Panc1 (cell line): ENCODE measurements at regions of chr17 and their contacts with region 1.

Region 1: GRCh38 chr17:67335329-67335835 is 31.0 kb downstream of the PSMD12 start:
- DNase-seq: no peak
- ATAC-seq: no peak
- H3K4me3 ChIP-seq: no peak overlapping the region
- H3K27ac ChIP-seq: no peak overlapping the region
- H3K4me1 ChIP-seq: no peaks in the 10 kb centered on the region
- H3K27me3 ChIP-seq: no peaks in the 10 kb centered on the region
- CTCF ChIP-seq: no peak

Region 2: DNA sequence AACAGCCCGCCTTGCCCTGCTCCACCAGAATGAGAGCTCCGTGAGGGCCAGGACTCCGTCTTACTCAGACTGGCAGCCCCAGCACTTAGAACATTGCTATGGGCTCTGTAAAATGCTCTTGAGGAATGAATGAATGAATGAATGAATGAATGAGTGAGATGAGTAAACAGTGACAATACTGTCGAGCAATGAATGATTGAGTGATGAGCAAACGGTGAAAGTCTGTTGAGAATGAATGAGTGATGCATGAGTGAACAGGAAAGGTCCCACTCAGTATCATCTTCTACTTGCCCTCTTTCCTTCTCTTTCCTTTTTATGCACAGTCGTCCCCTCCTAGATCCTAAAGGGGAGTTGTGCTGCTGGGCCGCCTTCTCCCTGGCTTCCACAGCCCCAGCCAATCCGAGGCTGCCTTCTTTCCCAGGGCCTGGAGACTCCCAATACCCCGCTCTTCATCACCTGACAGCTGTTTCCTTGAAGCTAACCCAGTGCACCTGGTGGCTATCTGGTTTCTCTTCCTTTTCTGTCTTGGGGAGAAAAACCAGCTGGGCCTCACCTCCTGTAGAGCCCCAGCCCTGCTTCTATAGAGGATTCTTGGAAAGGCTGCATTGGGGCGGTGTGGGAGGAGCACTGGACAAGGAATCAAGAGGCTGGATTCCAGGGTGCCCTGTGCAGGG is 323.7 kb before region 1 on chr17:
- CTCF ChIA-PET with region 1: interaction called, 15 read pairs
- POLR2A ChIA-PET with region 1: no interaction called
- in situ Hi-C with region 1: no loop called
- intact Hi-C with region 1: no loop called
- DNase-seq: no peak
- ATAC-seq: no peak
- H3K4me3 ChIP-seq: no peak overlapping the region
- H3K27ac ChIP-seq: no peak overlapping the region
- H3K4me1 ChIP-seq: no peaks in the 10 kb centered on the region
- H3K27me3 ChIP-seq: no peaks in the 10 kb centered on the region
- CTCF ChIP-seq: no peak